Dorsolateral prefrontal cortex (tissue), 120 donors: ENCODE measurements at regions of chr18 and their contacts with region 1.

Region 1: DNA sequence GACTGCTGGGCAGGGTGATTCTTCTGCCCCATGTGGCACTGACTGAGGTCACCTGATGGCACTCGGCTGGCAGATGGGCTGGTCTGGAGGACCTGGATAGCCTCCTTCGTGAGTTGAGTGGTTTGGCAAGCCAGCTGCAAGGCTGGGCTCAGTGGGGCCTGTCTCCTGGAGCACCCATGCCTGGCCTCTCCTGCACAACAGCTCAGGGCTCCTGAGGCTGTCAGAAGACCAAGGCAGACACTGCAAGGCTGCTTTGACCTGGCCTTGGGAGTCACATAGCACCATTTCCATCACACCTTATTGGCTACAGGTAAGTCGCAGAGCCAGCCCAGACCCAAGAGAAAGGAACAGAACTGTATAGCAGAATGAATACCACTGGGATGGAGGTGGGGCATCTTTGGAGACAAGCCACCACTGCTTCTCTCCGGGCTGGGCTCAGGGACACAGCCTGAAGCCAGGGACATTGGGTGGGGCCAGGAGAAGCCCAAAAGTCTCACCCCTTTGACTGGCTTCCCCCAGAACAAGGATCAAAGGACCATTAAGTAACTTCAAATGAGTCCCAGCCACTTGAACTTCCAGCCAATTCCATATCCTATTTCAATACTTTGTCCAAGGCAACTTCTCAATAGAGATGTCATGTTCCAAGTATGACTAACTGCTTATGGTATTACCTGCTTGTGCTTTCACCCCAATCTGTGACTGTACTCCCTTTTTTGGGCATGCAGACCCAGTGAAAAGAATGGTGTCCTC is 156.3 kb downstream of the CABLES1 start:
- DNase-seq: no peak
- H3K4me3 ChIP-seq: no peak overlapping the region
- H3K27ac ChIP-seq: no peak overlapping the region
- H3K27me3 ChIP-seq: no peaks in the 10 kb centered on the region
- CTCF ChIP-seq: no peak

Region 2: DNA sequence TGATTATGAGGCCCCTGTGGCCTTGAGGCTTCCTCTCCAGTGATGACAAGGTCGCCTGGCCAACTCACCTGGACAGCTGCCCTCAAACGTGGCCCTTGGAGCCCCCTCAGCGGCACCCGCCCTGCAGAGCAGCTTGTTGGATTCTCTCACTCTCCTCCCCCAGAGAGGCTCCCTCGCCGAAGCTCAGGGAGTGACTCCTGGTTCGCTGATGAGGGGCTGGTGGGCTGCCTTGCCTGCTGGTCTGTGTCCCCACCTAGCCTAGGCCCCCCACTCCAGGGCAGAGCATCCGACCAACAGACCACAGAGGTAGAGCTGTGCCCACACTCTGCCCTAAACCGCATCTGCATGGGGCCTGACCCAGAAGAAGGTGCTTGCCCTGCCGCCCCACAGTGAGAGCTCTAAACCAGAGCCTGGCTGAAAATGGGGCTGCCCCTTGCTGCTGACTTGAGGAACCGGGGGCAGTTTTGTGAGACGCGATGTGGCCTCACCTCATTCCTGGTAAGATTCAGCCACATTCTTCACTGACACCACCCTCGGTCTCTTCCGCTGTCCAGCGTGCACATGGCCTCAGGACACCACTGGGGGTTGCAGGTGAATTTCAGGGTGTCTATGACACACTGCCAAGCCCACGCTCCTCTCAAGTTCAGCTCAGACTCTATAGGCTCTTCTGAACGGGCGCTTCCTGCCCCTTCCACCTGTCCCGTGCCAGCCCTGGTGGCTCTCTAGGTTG is 24.7 kb before region 1 on chr18:
- intact Hi-C with region 1: no loop called
- DNase-seq: no peak
- H3K4me3 ChIP-seq: no peak overlapping the region
- H3K27ac ChIP-seq: no peak overlapping the region
- H3K27me3 ChIP-seq: no peaks in the 10 kb centered on the region
- CTCF ChIP-seq: no peak

Region 3: DNA sequence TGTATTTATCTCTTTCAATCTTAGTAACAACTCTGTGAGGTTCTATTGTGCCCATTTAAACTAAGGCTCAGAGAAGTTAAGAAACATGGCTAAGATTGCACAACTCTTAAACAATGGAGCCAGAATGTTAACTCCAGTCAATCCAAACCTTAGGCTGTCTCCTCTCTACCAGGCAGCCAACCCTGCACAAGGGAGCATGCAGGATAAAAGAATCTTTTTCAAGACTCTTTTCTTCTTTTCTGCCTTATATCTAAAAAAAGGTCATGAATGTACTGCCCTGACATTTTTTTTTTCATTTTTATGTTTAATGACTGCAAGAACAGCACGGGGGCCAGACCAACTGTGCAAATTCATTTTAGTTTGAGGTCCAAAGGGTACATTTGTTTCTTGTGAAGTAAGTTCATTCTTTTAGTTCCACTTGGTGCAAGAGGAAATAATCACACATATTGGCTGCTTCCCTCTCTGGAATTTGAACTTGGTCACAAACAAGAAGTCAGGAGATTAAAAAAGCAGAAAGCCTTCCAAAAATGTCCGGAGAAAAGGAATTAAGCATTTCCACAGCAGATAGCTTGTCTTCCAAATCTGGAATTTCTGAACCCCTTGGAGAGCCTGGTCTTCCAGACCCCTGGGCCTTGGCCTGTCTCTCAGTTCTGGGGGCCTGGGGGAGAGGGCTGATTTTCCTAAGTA is 65.4 kb after region 1 on chr18:
- intact Hi-C with region 1: no loop called
- DNase-seq: no peak
- H3K4me3 ChIP-seq: peak overlapping the region in 2 of 59 donors; percentile 31 to 41
- H3K27ac ChIP-seq: peak overlapping the region in 10 of 59 donors; percentile 1 to 66 (median 29)
- H3K27me3 ChIP-seq: no peaks in the 10 kb centered on the region
- CTCF ChIP-seq: no peak

Region 4: GRCh38 chr18:23377669-23378301 is 86.2 kb after region 1 on chr18:
- intact Hi-C with region 1: loop called in 1 of 2 experiments (anchors 10 kb)
- DNase-seq: no peak
- H3K4me3 ChIP-seq: no peak overlapping the region
- H3K27ac ChIP-seq: peak overlapping the region in 1 of 59 donors; percentile 48
- H3K27me3 ChIP-seq: no peaks in the 10 kb centered on the region
- CTCF ChIP-seq: no peak